ENCODE measurements at regions of chr22 and their contacts with region 1.

Region 1: DNA sequence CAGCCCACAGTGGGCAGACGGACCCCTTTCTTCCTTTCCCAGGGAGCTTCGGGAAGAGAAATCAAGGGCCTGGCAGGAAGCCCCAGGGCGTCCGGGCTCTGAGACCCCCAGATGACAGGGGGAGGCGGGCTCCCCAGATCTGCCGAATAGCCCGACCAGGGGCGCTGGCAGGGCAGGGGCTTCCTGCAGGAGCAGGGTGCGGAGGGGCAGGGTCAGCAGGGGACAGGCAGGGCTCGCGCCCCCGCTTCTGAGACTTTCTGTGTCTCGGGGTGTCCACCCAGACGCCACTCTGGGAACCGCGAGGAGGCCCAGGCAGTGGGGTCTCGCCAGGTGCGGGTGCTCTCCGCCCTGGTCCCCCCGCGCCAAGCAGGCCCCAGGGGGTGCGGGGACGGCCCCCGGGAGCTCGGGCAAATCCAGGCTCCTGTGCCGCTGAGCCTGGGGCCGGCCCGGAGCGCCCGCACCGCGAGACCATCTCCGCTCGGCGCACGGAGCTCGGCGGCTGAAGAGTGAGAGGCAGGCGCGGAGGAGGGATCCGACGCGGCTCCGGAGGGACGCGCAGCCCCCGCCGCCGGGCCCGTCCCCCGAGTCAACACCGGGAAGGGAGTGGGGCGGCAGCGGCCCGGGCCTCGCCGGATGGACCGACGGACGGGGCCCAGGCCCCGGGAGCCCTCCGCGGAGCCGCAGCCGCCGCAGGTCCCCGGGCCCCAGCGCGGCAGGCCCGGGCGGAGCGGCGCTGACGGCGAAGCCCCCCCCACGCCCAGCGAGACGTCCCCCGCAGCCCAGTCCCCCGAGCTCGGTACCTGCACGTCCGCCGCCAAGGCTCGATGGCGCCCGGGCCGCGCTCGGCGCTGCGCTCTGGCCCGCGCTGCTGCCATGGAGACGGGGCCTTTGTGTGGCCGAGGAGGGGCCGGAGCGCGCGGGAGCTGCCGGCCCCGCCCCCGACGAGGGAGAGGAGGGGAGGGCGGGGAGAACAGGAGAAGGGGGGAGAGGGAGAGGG is at the start of gene PLXNB2:
- DNase-seq: peak; percentile 40 to 77
- ATAC-seq: no peak
- H3K4me3 ChIP-seq: peak within 1 kb of the TSS; percentile 100
- H3K27ac ChIP-seq: peak within 1 kb of the TSS; percentile 98 to 100
- H3K4me1 ChIP-seq: peaks cover 48% of the 10 kb centered on the region
- CTCF ChIP-seq: no peak
- EP300 ChIP-seq: no peak
- POLR2A ChIP-seq: peak; percentile 53
- RAD21 ChIP-seq: no peak
- polyA plus RNA-seq, gene PLXNB2: 24.6 and 32.4 TPM in 2 replicates

Region 2: GRCh38 chr22:50030297-50031188 is 276.5 kb before region 1 on chr22:
- CTCF ChIA-PET with region 1: no interaction called
- POLR2A ChIA-PET with region 1: no interaction called
- DNase-seq: peak; percentile 83 to 85
- ATAC-seq: peak; percentile 88 to 95
- H3K4me3 ChIP-seq: peak overlapping the region; percentile 37; the same call in 2 of the 3 replicates
- H3K27ac ChIP-seq: peak overlapping the region in 1 of 2 experiments; percentile 35; a peak in 1 of 6 replicates
- H3K4me1 ChIP-seq: peaks cover 6% of the 10 kb centered on the region; the same call in 1 of the 3 replicates
- CTCF ChIP-seq: peak; percentile 81
- EP300 ChIP-seq: no peak
- POLR2A ChIP-seq: no peak
- RAD21 ChIP-seq: peak; percentile 86 to 93

Region 3: GRCh38 chr22:50293441-50294318 is 13.4 kb before region 1 on chr22:
- CTCF ChIA-PET with region 1: interaction called, 8 read pairs
- POLR2A ChIA-PET with region 1: interaction called, 11 read pairs
- DNase-seq: peak in 1 of 2 experiments; percentile 62
- ATAC-seq: peak; percentile 71 to 84
- H3K4me3 ChIP-seq: peak overlapping the region; percentile 35
- H3K27ac ChIP-seq: peak overlapping the region; percentile 92 to 94
- H3K4me1 ChIP-seq: peaks cover 48% of the 10 kb centered on the region
- CTCF ChIP-seq: no peak
- EP300 ChIP-seq: no peak
- POLR2A ChIP-seq: no peak
- RAD21 ChIP-seq: no peak